Uterus (tissue), 4 donors: ENCODE measurements at regions of chr7 and their contacts with region 1.

Region 1: DNA sequence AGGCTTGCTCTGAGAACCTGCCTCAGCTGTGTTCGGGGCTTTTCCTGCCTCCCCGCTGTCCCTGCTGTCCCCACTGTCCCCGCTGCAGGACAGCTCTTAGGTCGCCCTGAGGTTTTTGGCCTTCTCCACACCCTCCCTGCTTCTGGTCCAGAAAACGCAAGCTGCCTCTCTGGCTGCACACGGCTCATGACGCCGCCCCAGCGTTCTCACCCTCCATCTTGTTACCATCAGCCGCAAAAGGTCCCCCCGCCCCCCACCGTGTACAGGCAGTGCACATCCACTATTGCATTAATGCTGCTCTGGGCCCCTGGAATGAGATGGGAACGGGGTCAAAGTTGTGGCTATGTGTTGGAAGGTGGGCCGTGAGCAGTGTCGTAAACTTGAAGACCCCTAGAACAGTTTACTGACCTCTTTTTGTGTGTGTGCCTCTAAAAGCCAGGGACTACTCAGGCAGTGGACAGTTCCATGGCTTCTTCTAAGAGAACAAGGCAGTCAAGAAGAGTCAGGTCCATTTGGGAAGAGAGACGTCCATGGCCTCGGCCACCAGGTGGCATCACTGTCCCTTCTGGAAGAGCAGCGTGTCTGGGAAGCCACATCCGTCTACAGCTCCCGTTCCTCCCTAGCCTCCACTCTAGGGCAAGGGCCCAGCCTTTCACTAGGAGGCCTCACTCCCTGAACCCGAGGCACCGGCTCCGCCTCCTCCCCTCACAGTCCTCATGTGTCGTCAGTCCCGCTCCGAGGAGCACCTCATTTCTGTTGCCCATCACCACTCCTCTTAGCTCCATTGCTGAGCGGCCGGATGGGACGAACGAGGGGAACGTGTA is 38.5 kb upstream of the MKRN1 start:
- DNase-seq: peak; percentile 92 to 94
- H3K4me3 ChIP-seq: no peak overlapping the region
- H3K27ac ChIP-seq: peak overlapping the region; percentile 67 to 74
- H3K4me1 ChIP-seq: peaks cover 0 to 9% of the 10 kb centered on the region in 2 donors
- H3K27me3 ChIP-seq: no peaks in the 10 kb centered on the region
- CTCF ChIP-seq: peak; percentile 84 to 94 (median 86)
- POLR2A ChIP-seq: no peak

Region 2: DNA sequence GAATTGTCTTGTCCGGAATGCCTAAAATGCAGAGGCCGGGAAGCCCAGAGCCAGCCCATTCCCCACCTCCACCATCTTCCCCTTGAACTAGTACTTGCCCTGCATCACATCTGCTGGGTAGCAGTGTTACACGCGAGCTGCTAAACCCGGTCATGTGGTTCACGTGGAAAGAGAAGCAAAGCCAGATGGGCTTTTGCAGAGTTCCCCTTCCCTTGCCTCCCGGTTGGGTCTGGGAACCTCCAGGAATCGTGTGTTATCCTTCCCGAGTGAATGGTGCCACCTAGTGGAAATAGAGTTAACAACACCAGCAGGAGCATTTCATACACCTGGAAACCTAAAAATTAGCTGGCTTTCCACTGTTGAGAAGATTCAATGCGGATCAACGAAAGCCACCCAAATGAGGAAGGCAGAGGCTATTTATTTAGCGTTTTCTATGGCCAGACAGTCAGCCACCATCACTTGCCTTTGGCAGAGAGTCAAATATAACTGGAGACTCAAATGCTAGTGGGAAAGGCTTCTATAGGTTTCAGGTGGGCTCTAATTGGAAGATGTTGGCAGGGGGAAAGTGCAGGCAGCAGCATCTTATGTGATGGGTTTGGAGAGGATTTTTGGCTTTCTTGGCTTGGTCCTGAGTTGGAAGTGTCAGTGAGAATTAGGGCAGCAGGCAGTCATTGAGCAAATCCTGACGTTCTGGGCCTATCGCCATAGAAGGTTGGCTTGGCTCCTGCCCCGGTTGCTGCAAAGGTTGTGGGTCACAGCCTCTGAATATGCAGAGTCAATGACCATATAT is 135.8 kb after region 1 on chr7:
- intact Hi-C with region 1: loop called (anchors 5 kb)
- DNase-seq: peak; percentile 74 to 79
- H3K4me3 ChIP-seq: no peak overlapping the region
- H3K27ac ChIP-seq: no peak overlapping the region
- H3K4me1 ChIP-seq: no peaks in the 10 kb centered on the region
- H3K27me3 ChIP-seq: no peaks in the 10 kb centered on the region
- CTCF ChIP-seq: peak; percentile 89 to 92 (median 91)
- POLR2A ChIP-seq: no peak